HEK293T (cell line): ENCODE measurements at regions of chr6 and their contacts with region 1.

Region 1: DNA sequence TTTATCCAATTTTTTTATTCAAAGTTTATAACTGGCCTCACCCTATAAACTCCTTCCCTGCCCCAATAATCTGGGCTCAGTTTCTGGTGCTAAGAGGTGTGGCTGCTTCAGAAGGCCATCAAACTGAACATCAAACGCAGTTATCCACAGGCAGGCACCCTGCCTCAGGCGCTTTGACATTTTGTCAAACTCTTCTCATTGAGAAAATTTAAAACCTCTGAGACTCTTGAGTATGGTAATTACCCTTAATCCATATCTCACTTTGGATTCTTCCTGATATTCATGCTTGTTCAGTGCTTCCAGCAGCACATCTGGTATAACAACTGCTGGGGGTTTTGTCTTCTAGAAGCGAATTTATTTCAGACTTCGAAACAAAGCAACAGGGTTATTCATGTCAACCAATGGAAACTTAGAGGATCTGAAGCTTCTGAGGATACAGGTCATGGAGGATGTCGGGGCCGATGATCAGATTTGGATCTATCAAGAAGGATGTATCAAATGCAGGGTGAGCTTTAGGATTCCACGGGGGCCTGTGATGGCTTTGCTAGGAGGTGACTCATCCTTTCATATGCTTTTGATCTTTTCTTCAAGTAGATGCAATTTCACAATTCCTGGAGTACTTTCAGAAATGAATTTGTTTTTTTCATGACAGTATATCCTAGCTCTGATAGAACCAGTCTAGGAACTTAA is 68.2 kb downstream of the RTN4IP1 start:
- DNase-seq: no peak

Region 2: GRCh38 chr6:106442395-106442794 is 118.7 kb before region 1 on chr6:
- CTCF ChIA-PET with region 1: interaction called, 14 read pairs
- POLR2A ChIA-PET with region 1: no interaction called
- DNase-seq: no peak

Region 3: GRCh38 chr6:106448000-106448426 is 113.1 kb before region 1 on chr6:
- CTCF ChIA-PET with region 1: interaction called, 14 read pairs
- POLR2A ChIA-PET with region 1: no interaction called
- DNase-seq: no peak